ENCODE measurements at regions of chr2 and their contacts with region 1.

Region 1: GRCh38 chr2:47386551-47386950 is 16.4 kb upstream of the MSH2 start:
- DNase-seq: no peak
- ATAC-seq: no peak
- H3K4me3 ChIP-seq: no peak overlapping the region
- H3K27ac ChIP-seq: no peak overlapping the region
- H3K4me1 ChIP-seq: no peaks in the 10 kb centered on the region
- H3K27me3 ChIP-seq: no peaks in the 10 kb centered on the region
- CTCF ChIP-seq: no peak

Region 2: DNA sequence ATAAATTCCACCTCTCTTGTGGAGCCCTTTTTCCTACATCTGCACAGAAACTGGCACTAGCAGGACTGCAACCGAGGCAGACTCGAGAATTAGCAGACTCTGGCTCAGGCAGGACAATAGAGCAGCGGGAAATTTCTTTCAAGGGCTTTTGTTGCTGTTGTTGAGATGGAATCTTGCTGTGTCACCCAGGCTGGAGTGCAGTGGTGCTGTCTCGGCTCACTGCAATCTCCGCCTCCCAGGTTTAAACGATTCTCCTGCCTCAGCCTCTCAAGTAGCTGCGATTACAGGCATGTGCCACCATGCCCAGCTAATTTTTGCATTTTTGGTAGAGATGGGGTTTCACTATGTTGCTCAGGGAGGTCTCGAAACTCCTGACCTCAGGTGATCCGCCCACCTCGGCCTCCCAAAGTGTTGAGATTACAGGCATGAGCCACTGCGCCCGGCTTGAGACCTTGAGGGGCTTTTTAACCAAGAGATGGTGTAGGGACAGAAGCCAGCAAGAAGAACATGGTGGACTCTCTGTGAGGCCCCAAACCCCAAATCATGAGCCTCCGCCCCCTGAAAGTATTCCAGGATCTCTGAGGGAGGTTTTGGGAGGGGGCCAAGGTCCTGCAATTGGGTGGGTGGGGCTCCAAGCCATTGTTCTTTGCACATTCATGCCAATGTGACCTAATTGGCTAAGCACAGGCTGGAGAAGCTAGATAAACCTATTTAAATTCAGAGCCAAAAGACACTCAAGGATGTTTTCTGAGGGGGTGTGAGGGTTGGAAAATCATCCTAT is 52.0 kb before region 1 on chr2:
- intact Hi-C with region 1: loop called in 2 of 3 experiments (anchors 5 kb)
- DNase-seq: peak in 1 of 6 donors; percentile 23
- ATAC-seq: peak in 1 of 4 donors; percentile 3
- H3K4me3 ChIP-seq: no peak overlapping the region
- H3K27ac ChIP-seq: no peak overlapping the region
- H3K4me1 ChIP-seq: peaks cover 0 to 16% (median 3%) of the 10 kb centered on the region in 3 donors
- H3K27me3 ChIP-seq: no peaks in the 10 kb centered on the region
- CTCF ChIP-seq: no peak

Region 3: GRCh38 chr2:47422560-47422959 is 36.0 kb after region 1 on chr2:
- intact Hi-C with region 1: no loop called
- DNase-seq: no peak
- ATAC-seq: no peak
- H3K4me3 ChIP-seq: no peak overlapping the region
- H3K27ac ChIP-seq: no peak overlapping the region
- H3K4me1 ChIP-seq: no peaks in the 10 kb centered on the region
- H3K27me3 ChIP-seq: no peaks in the 10 kb centered on the region
- CTCF ChIP-seq: no peak

Region 4: DNA sequence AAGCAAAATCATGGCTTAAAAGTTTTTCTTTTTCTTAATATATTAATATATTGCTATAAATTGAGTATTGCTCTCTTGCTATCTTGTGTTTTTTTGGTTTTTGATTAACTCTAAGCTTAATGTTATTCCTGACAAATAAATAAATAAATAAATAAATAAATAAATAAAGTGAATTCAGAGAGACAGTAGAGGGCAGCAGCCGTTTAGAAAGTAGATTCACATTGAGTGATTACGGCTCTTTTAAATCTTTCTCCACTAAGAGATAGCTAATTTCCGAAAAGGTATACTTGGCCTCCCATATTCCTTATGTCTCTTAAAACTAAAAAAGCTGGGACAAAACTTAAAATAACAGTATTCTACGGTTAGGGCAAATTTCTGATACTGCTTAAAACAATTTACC is 50.7 kb after region 1 on chr2:
- intact Hi-C with region 1: no loop called
- DNase-seq: no peak
- ATAC-seq: peak in 3 of 4 donors; percentile 59 to 70 (median 67)
- H3K4me3 ChIP-seq: no peak overlapping the region
- H3K27ac ChIP-seq: no peak overlapping the region
- H3K4me1 ChIP-seq: no peaks in the 10 kb centered on the region
- H3K27me3 ChIP-seq: no peaks in the 10 kb centered on the region
- CTCF ChIP-seq: peak in 2 of 4 donors; percentile 15 to 21

Region 5: GRCh38 chr2:48272199-48272598 is 885.6 kb after region 1 on chr2:
- intact Hi-C with region 1: no loop called
- DNase-seq: no peak
- ATAC-seq: no peak
- H3K4me3 ChIP-seq: no peak overlapping the region
- H3K27ac ChIP-seq: no peak overlapping the region
- H3K4me1 ChIP-seq: no peaks in the 10 kb centered on the region
- H3K27me3 ChIP-seq: no peaks in the 10 kb centered on the region
- CTCF ChIP-seq: no peak

Measured in pancreas (tissue), 10 donors.